IMR-90 (cell line): ENCODE measurements at regions of chr4 and their contacts with region 1.

Region 1: DNA sequence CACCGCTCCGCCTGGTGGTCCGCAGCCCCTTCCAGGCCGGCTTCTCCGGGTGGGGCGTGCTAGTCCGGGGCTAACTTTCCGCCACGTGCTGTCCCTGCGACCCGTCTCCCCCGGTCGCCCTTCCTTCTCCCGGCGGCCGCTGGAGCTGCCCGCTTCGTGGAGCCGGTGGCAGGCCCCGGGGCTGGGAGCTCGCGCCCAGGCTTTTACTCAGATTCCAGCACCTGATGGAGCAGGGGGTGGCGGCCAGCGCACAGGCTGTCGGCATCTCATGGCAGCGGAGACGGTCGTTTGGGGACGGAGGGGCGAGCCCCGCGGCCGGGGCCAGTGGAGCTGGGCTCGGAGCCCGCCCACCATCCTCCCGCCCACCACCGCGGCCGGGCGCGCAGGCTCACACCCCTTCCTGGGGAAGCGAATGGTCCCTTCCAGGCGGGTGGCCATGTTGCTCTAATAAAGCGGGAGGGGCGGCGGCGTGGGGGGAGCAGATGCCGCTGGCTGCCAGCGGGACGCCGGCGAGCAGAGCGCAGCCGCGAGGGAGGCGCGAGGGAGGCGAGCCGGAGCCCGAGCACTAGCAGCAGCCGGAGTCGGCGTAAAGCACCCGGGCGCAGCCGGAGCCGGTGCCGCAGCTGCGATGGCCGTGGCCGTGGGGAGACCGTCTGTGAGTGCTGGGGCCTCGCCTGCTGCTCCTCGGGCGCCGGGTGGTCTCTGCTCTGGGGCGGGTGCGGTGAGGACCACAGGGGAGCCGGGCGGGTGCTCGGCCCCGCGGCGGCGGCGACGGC is at the start of gene SEPTIN11:
- DNase-seq: peak; percentile 93
- ATAC-seq: peak; percentile 82
- H3K4me3 ChIP-seq: peak within 1 kb of the TSS; percentile 57
- H3K27ac ChIP-seq: peak within 1 kb of the TSS; percentile 89
- H3K4me1 ChIP-seq: peaks cover 5% of the 10 kb centered on the region
- H3K27me3 ChIP-seq: no peaks in the 10 kb centered on the region
- CTCF ChIP-seq: no peak
- POLR2A ChIP-seq: peak; percentile 98
- RAD21 ChIP-seq: peak; percentile 17; the same call in 1 of the 2 replicates
- total RNA-seq, gene SEPTIN11: 573 and 632 TPM in 2 replicates

Region 2: DNA sequence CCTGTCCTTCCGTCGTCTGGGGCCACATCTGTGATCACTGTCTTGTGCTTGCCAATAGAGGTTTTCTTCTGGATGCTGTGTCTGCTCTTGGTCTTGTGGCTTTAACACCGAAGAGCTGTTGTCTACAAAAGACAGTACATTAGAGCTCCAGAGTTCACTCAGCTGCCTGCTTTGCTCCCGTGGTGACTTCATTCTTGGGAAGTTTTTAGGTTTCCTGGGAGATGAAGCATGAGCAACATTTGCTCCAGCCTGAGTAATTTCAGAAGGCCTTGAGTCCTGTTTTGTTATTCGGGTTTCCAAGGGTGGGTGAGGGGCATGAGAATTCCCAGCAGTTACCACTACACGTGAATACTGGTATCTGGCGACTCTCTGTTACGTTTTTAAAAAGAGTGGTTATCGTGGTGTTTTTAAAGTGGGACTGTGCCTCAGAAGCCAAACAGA is 325.2 kb before region 1 on chr4:
- CTCF ChIA-PET with region 1: no interaction called
- POLR2A ChIA-PET with region 1: no interaction called
- dilution Hi-C with region 1: no loop called
- in situ Hi-C with region 1: no loop called
- intact Hi-C with region 1: loop called (anchors 10 kb)
- DNase-seq: peak; percentile 94
- ATAC-seq: peak; percentile 87
- H3K4me3 ChIP-seq: no peak overlapping the region
- H3K27ac ChIP-seq: peak overlapping the region; percentile 86
- H3K4me1 ChIP-seq: peaks cover 13% of the 10 kb centered on the region
- H3K27me3 ChIP-seq: no peaks in the 10 kb centered on the region
- CTCF ChIP-seq: no peak
- POLR2A ChIP-seq: no peak; the same call in 1 of the 2 replicates
- RAD21 ChIP-seq: peak; percentile 3; the same call in 1 of the 2 replicates

Region 3: DNA sequence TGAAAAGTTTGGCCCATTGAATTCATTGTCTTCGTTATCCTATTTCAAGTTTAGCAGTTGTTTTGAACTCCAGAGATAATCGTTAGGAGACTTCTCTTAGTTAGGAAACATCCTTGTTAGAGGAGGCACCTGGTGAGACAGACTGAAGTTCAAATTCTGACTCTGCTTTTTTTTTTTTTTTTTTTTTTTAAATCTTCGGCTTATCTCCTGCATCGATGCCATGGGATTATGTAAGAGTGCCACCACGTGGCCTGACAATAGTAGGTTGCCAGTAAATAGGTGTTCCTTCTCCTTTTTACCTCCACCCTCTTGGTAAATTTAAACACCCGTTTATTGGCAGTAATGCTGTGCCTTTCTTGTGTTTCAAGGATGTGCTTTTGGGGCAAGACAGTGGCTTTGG is 200.8 kb before region 1 on chr4:
- CTCF ChIA-PET with region 1: no interaction called
- POLR2A ChIA-PET with region 1: interaction called, 3 read pairs
- dilution Hi-C with region 1: no loop called
- in situ Hi-C with region 1: no loop called
- intact Hi-C with region 1: loop called (anchors 1 kb)
- DNase-seq: peak; percentile 41
- ATAC-seq: no peak
- H3K4me3 ChIP-seq: no peak overlapping the region
- H3K27ac ChIP-seq: no peak overlapping the region
- H3K4me1 ChIP-seq: peaks cover 11% of the 10 kb centered on the region
- H3K27me3 ChIP-seq: no peaks in the 10 kb centered on the region
- CTCF ChIP-seq: peak; percentile 41
- POLR2A ChIP-seq: no peak
- RAD21 ChIP-seq: peak; percentile 64

Region 4: GRCh38 chr4:76984127-76984526 is 34.7 kb after region 1 on chr4:
- CTCF ChIA-PET with region 1: no interaction called
- POLR2A ChIA-PET with region 1: interaction called, 4 read pairs
- dilution Hi-C with region 1: no loop called
- in situ Hi-C with region 1: no loop called
- intact Hi-C with region 1: loop called (anchors 1 kb)
- DNase-seq: peak; percentile 69
- ATAC-seq: no peak
- H3K4me3 ChIP-seq: no peak overlapping the region
- H3K27ac ChIP-seq: peak overlapping the region; percentile 12
- H3K4me1 ChIP-seq: peaks cover 36% of the 10 kb centered on the region
- H3K27me3 ChIP-seq: no peaks in the 10 kb centered on the region
- CTCF ChIP-seq: peak; percentile 50
- POLR2A ChIP-seq: no peak
- RAD21 ChIP-seq: peak; percentile 36

Region 5: GRCh38 chr4:77022560-77023179 is 73.2 kb after region 1 on chr4:
- CTCF ChIA-PET with region 1: interaction called, 4 read pairs
- POLR2A ChIA-PET with region 1: no interaction called
- dilution Hi-C with region 1: no loop called
- in situ Hi-C with region 1: loop called (anchors 10 kb)
- intact Hi-C with region 1: loop called (anchors 5 kb)
- DNase-seq: peak; percentile 81
- ATAC-seq: peak; percentile 67
- H3K4me3 ChIP-seq: no peak overlapping the region
- H3K27ac ChIP-seq: peak overlapping the region; percentile 65
- H3K4me1 ChIP-seq: peaks cover 23% of the 10 kb centered on the region
- H3K27me3 ChIP-seq: no peaks in the 10 kb centered on the region
- CTCF ChIP-seq: no peak
- POLR2A ChIP-seq: no peak
- RAD21 ChIP-seq: no peak

Region 6: GRCh38 chr4:77044461-77045150 is 95.1 kb after region 1 on chr4:
- CTCF ChIA-PET with region 1: interaction called, 3 read pairs
- POLR2A ChIA-PET with region 1: no interaction called
- dilution Hi-C with region 1: no loop called
- in situ Hi-C with region 1: no loop called
- intact Hi-C with region 1: loop called (anchors 1 kb)
- DNase-seq: peak; percentile 80
- ATAC-seq: peak; percentile 36; the same call in 1 of the 2 replicates
- H3K4me3 ChIP-seq: no peak overlapping the region
- H3K27ac ChIP-seq: peak overlapping the region; percentile 12; the same call in 1 of the 2 replicates
- H3K4me1 ChIP-seq: peaks cover 10% of the 10 kb centered on the region
- H3K27me3 ChIP-seq: no peaks in the 10 kb centered on the region
- CTCF ChIP-seq: peak; percentile 64
- POLR2A ChIP-seq: no peak
- RAD21 ChIP-seq: peak; percentile 40

Region 7: DNA sequence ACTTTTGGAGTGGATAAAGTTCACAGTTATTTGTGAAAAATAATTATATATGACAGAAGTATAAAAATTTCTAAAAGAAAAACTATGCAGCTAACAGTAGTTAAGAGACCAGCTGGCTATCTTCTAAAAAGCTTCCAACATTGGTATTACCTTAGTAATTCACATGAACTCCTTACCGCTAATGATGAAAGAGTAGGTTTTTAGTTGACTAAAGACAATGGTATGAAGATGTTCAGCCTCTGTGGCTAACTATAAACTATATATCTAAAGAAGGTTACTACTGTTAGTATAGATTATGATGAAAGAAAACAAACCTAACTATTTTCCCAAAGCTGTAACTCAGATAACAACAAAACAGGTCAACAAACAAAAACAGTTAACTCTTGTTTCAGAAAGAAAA is 115.9 kb after region 1 on chr4:
- CTCF ChIA-PET with region 1: no interaction called
- POLR2A ChIA-PET with region 1: no interaction called
- dilution Hi-C with region 1: no loop called
- in situ Hi-C with region 1: no loop called
- intact Hi-C with region 1: no loop called
- DNase-seq: peak; percentile 80
- ATAC-seq: peak; percentile 58
- H3K4me3 ChIP-seq: no peak overlapping the region
- H3K27ac ChIP-seq: no peak overlapping the region
- H3K4me1 ChIP-seq: peaks cover 5% of the 10 kb centered on the region
- H3K27me3 ChIP-seq: no peaks in the 10 kb centered on the region
- CTCF ChIP-seq: no peak
- POLR2A ChIP-seq: no peak
- RAD21 ChIP-seq: no peak

Region 8: GRCh38 chr4:77203380-77204197 is 254.1 kb after region 1 on chr4:
- CTCF ChIA-PET with region 1: no interaction called
- POLR2A ChIA-PET with region 1: no interaction called
- dilution Hi-C with region 1: no loop called
- in situ Hi-C with region 1: no loop called
- intact Hi-C with region 1: loop called (anchors 2 kb)
- DNase-seq: peak; percentile 82
- ATAC-seq: peak; percentile 93
- H3K4me3 ChIP-seq: no peak overlapping the region
- H3K27ac ChIP-seq: no peak overlapping the region
- H3K4me1 ChIP-seq: no peaks in the 10 kb centered on the region
- H3K27me3 ChIP-seq: peaks cover 50% of the 10 kb centered on the region
- CTCF ChIP-seq: peak; percentile 86
- POLR2A ChIP-seq: no peak
- RAD21 ChIP-seq: peak; percentile 94